ENCODE measurements at regions of chr9 and their contacts with region 1.

Region 1: GRCh38 chr9:125460840-125461635 is 199.4 kb downstream of the GAPVD1 start:
- DNase-seq: no peak
- H3K4me3 ChIP-seq: no peak overlapping the region
- H3K27ac ChIP-seq: no peak overlapping the region
- H3K4me1 ChIP-seq: no peaks in the 10 kb centered on the region; a peak in 1 of 7 replicates
- H3K27me3 ChIP-seq: no peaks in the 10 kb centered on the region
- CTCF ChIP-seq: no peak
- EP300 ChIP-seq: no peak
- POLR2A ChIP-seq: no peak
- RAD21 ChIP-seq: no peak

Region 2: DNA sequence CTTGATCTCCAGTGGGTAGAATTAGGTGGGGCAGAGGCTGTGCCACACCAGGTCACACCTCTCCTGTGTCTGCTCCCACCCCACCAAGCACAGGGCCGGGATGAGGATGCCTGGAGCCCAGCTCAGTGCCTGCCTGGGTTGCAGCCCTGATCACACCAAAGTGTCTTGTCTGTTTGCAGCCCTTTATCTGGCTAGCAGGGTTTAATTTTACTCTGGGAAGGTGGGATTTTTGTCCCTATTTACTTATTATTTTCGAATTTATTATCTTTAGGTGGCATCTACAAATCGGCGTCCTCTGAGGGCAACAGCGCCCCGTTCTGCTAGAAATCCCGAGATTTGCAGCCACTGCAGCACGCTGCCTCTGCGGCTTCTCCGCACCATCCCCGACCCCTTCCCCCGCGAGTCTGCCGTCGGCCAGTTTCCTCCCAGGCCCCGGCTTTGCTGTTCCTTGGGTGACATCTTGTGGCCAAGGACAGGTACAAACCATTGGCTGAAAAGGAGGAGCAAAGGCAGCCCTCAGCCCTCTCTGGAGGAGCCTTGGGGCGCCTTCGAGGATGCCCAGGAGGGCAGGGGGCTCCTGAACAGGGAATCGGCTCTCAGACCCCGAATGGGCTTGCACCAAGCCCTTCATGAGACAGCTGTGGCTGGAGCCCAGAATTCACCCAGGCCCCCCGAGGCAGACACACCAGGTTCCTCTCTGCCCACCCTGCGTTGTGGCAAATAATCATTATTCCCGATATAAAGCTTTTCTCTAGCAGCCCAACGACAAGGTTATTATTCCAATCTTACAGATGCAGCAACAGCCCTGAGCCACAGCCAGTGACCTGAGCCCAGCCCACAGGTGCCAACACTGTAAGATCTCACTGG is 86.4 kb before region 1 on chr9:
- CTCF ChIA-PET with region 1: no interaction called
- POLR2A ChIA-PET with region 1: no interaction called
- DNase-seq: peak; percentile 68 to 81
- H3K4me3 ChIP-seq: peak overlapping the region in 2 of 4 experiments; percentile 10 to 35; a peak in 3 of 8 replicates
- H3K27ac ChIP-seq: no peak overlapping the region
- H3K4me1 ChIP-seq: peaks cover 0 to 11% (median 4%) of the 10 kb centered on the region in 4 experiments; a peak in 4 of 7 replicates
- H3K27me3 ChIP-seq: no peaks in the 10 kb centered on the region; a peak in 1 of 7 replicates
- CTCF ChIP-seq: peak; percentile 69 to 93 (median 89)
- EP300 ChIP-seq: no peak
- POLR2A ChIP-seq: no peak
- RAD21 ChIP-seq: peak; percentile 100

Region 3: DNA sequence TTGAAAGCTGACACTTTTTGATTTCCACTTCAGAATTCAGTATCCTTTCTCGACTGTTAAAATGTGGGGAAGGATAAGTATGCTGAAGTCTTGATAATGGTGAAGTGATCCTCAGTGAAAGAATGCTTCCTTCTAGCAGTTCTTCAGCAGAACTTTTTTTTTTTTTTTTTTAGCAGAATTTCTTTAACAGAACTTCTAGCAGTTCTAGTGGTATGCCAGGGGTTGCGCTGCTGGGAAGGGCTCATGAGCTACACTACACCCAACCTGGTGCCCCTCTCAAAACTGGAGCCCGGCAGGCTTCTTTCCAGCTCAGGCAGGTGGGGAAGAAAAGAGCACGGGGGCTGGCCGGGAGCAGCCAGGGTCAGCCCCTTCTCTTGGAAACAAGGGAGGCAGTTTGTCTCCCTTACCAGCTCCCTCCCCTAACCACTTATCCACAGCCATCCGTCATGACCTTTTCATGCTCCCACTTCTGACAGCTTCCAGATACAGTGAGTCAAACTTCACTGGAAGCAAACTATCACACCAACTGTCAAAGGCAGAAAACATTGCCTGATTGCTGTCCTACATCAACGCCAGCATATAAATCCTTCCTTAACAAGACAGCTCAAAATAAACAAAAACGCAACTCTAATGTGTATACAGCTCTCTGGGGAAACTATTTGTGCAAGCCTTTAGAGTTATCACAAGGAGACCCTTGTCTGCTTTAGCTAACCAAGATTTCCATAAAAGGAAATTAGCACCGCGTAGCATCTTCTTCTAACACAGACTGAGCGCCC is 12.1 kb after region 1 on chr9:
- CTCF ChIA-PET with region 1: interaction called, 11 read pairs
- POLR2A ChIA-PET with region 1: interaction called, 5 read pairs
- DNase-seq: no peak
- H3K4me3 ChIP-seq: no peak overlapping the region
- H3K27ac ChIP-seq: no peak overlapping the region
- H3K4me1 ChIP-seq: peaks cover 0 to 10% (median 2%) of the 10 kb centered on the region in 4 experiments; a peak in 3 of 7 replicates
- H3K27me3 ChIP-seq: no peaks in the 10 kb centered on the region
- CTCF ChIP-seq: peak in 2 of 3 experiments; percentile 17 to 20; a peak in 2 of 4 replicates
- EP300 ChIP-seq: no peak
- POLR2A ChIP-seq: no peak
- RAD21 ChIP-seq: peak; percentile 25 to 37; a peak in 3 of 4 replicates